Activated CD4-positive, alpha-beta T cell treated with anti-CD3 and anti-CD28 coated beads, Interleukin-2, amount 10 ng/mL, durations not matched to agents 24 days and 14 days (primary cell): ENCODE measurements at regions of chr7 and their contacts with region 1.

Region 1: GRCh38 chr7:876167-876967 is at the start of gene GET4:
- DNase-seq: peak; percentile 100
- H3K4me3 Mint-ChIP-seq: peak within 1 kb of the TSS; percentile 98
- H3K27ac Mint-ChIP-seq: peak within 1 kb of the TSS; percentile 92
- H3K4me1 Mint-ChIP-seq: peaks cover 17% of the 10 kb centered on the region
- H3K27me3 Mint-ChIP-seq: no peaks in the 10 kb centered on the region
- total RNA-seq, gene GET4: 35.8 and 41.0 TPM in 2 replicates

Region 2: GRCh38 chr7:322111-322671 is 554.2 kb before region 1 on chr7:
- intact Hi-C with region 1: loop called (anchors 1 kb)
- DNase-seq: peak; percentile 97
- H3K4me3 Mint-ChIP-seq: no peak overlapping the region
- H3K27ac Mint-ChIP-seq: no peak overlapping the region
- H3K4me1 Mint-ChIP-seq: no peaks in the 10 kb centered on the region
- H3K27me3 Mint-ChIP-seq: peaks cover 4% of the 10 kb centered on the region

Region 3: GRCh38 chr7:786472-787255 is 89.7 kb before region 1 on chr7:
- intact Hi-C with region 1: loop called (anchors 1 kb)
- DNase-seq: peak; percentile 90
- H3K4me3 Mint-ChIP-seq: no peak overlapping the region
- H3K27ac Mint-ChIP-seq: no peak overlapping the region
- H3K4me1 Mint-ChIP-seq: peaks cover 3% of the 10 kb centered on the region
- H3K27me3 Mint-ChIP-seq: no peaks in the 10 kb centered on the region

Region 4: GRCh38 chr7:831596-832166 is 44.7 kb before region 1 on chr7:
- intact Hi-C with region 1: loop called (anchors 2 kb)
- DNase-seq: peak; percentile 73
- H3K4me3 Mint-ChIP-seq: peak overlapping the region; percentile 81
- H3K27ac Mint-ChIP-seq: peak overlapping the region; percentile 96
- H3K4me1 Mint-ChIP-seq: peaks cover 36% of the 10 kb centered on the region
- H3K27me3 Mint-ChIP-seq: no peaks in the 10 kb centered on the region

Region 5: DNA sequence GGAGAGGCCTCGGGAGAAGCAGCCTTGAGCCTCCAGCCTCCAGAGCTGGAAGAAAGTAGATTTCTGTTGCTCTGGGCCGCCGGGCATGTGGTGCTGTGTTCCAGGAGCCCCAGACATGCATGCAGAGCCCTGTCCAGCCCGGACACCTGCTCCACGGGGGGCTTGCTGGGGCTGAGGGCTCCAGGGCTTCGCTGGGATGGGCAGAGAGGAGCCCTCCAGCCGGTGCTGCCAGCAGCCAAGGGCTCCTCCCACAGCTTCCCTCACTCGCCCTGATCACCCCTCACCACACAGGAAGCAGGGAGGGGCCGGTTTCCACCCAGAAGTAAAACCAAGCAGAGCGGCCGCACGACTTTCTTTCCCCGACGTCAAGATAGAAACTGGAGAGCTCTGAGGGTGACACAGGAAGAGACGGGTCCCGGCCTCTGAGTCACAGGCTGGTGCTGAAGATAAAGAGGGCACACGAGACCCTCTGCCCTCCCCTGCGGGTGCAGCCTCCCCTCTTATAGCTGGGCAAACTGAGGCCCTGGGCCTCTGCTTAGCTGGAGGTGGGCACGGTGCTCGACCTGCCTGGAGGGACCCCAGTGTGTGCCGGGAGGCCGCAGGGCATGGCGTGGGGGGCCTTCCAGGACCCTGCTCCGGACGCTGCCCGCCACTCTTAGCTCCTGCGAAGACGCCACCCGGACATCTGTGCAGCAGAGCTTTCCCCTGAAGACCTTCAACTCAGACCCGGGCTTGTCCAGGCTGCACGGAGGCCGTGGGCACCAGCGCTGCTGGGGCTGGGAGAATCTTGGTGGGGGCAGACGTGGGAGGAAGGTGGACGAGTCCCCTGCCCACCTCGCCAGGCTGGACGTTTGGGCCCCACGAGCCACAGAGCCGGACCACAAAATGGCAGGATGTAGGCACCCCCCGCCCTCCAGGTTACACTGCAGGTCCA is 47.0 kb after region 1 on chr7:
- intact Hi-C with region 1: loop called (anchors 1 kb)
- DNase-seq: peak; percentile 97
- H3K4me3 Mint-ChIP-seq: peak overlapping the region; percentile 87
- H3K27ac Mint-ChIP-seq: peak overlapping the region; percentile 96
- H3K4me1 Mint-ChIP-seq: peaks cover 34% of the 10 kb centered on the region
- H3K27me3 Mint-ChIP-seq: no peaks in the 10 kb centered on the region

Region 6: DNA sequence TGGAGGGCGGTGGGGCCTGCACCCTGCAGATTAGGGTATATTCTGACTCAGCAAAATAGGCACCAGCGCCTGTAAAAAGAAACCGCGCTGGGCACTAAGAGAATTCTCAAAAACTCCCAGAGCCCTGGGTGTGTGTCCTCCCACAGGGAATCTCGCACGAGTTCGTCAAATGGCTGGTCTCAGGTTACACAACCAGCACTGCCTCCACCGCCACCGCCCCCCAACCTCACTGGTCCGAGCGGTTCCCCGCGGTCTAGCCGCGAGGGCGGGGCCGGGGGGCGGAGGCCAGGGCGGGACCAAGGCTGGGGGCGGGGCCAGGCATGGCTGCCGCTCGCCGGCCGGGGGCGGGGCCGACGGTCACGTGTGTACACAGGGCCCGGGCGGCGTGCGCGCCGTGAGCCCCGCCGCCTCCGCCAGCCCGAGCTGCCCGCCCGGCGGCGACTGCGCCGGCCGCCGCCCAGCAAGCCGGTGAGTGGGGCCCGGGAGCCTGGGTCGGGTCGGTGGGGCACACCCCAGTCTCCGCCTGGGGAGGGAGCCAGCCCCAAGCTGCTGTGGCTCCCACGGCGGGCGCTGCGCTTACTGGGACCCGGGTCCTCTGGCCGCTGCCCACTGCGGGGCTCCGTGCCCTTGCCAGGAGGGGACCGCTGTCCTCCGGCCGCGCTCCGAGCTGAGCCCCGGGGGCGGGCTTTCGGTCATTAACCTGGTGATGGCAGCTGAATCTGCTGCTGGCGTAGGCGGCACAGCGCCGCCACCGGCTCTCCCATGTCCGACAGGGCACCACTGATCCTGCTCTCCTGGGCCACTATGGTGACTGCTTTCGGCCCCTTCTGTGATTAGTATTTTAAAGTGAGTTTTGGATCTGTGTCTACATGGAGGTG is 168.1 kb after region 1 on chr7 and contains the start of gene GPR146:
- intact Hi-C with region 1: loop called (anchors 2 kb)
- DNase-seq: peak; percentile 97
- H3K4me3 Mint-ChIP-seq: peak within 1 kb of the TSS; percentile 89
- H3K27ac Mint-ChIP-seq: peak within 1 kb of the TSS; percentile 78
- H3K4me1 Mint-ChIP-seq: peaks cover 57% of the 10 kb centered on the region
- H3K27me3 Mint-ChIP-seq: no peaks in the 10 kb centered on the region
- total RNA-seq, gene GPR146: 2.5 and 4.1 TPM in 2 replicates